Activated CD4-positive, alpha-beta T cell treated with anti-CD3 and anti-CD28 coated beads for 36 hours (primary cell): ENCODE measurements at regions of chr12 and their contacts with region 1.

Region 1: GRCh38 chr12:92199819-92200576 is 54.4 kb upstream of the BTG1 start:
- DNase-seq: no peak
- ATAC-seq: no peak
- H3K4me3 Mint-ChIP-seq: no peak overlapping the region
- H3K27ac Mint-ChIP-seq: no peak overlapping the region
- H3K4me1 Mint-ChIP-seq: peaks cover 6% of the 10 kb centered on the region
- H3K27me3 Mint-ChIP-seq: no peaks in the 10 kb centered on the region

Region 2: DNA sequence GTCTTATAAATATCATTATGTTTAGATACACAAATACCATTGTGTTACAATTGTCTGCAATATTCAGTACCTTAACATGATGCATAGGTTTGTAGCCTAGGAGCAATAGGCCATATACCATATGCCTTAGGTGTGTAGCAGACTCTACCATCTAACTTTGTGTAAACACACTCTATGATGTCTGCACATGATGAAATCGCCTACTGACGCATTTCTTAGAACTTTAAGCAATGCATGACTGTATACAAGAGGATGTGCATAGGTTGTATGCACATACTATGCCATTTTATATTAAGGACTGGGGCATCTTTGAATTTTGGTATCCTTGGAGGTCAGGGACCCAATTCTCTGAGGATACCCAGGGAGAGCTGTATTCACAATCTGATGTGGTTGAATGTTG is 44.3 kb before region 1 on chr12:
- CTCF ChIA-PET with region 1: no interaction called
- POLR2A ChIA-PET with region 1: no interaction called
- intact Hi-C with region 1: loop called in 1 of 2 experiments (anchors 1 kb)
- DNase-seq: no peak
- ATAC-seq: peak; percentile 23
- H3K4me3 Mint-ChIP-seq: no peak overlapping the region
- H3K27ac Mint-ChIP-seq: no peak overlapping the region
- H3K4me1 Mint-ChIP-seq: peaks cover 40% of the 10 kb centered on the region
- H3K27me3 Mint-ChIP-seq: no peaks in the 10 kb centered on the region